BJ (cell line): ENCODE measurements at regions of chr3 and their contacts with region 1.

Region 1: GRCh38 chr3:125594581-125595011 is 701 bp downstream of the OSBPL11 start:
- DNase-seq: peak; percentile 2
- H3K4me3 ChIP-seq: peak overlapping the region; percentile 89
- H3K27me3 ChIP-seq: no peaks in the 10 kb centered on the region
- CTCF ChIP-seq: no peak

Region 2: GRCh38 chr3:124584552-124585391 is 1009.8 kb before region 1 on chr3:
- CTCF ChIA-PET with region 1: no interaction called
- POLR2A ChIA-PET with region 1: interaction called, 16 read pairs
- DNase-seq: no peak
- H3K4me3 ChIP-seq: peak overlapping the region; percentile 38
- H3K27me3 ChIP-seq: peaks cover 27% of the 10 kb centered on the region
- CTCF ChIP-seq: no peak